Activated CD8-positive, alpha-beta T cell treated with anti-CD3 and anti-CD28 coated beads, Interleukin-2, amount 10 ng/mL, durations not matched to agents 7 days and 5 days (primary cell): ENCODE measurements at regions of chr12 and their contacts with region 1.

Region 1: DNA sequence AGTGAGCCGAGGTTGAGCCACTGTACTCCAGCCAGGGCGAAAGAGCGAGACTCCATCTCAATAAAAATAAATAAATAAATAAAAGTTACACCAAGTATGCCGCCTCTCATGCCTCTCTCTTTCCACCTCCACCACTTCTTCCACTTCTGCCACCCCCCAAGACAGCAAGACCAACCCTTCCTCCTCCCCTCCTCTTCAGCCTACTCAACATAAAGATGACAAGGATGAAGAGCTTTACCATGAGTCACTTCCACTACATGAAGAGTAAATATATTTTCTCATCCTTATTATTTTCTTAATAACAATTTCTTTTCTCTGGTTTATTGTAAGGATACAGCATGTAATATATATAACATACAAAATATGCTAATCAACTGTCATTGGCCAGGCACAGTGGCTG is 3.6 kb upstream of the TMED2 start:
- DNase-seq: no peak
- ATAC-seq: no peak
- H3K4me3 Mint-ChIP-seq: no peak overlapping the region
- H3K27ac Mint-ChIP-seq: no peak overlapping the region
- H3K4me1 Mint-ChIP-seq: peaks cover 17% of the 10 kb centered on the region
- H3K27me3 Mint-ChIP-seq: no peaks in the 10 kb centered on the region

Region 2: GRCh38 chr12:123427036-123427769 is 153.6 kb before region 1 on chr12:
- CTCF ChIA-PET with region 1: interaction called, 13 read pairs
- POLR2A ChIA-PET with region 1: no interaction called
- DNase-seq: peak; percentile 42
- ATAC-seq: peak; percentile 57
- H3K4me3 Mint-ChIP-seq: no peak overlapping the region
- H3K27ac Mint-ChIP-seq: peak overlapping the region; percentile 85
- H3K4me1 Mint-ChIP-seq: peaks cover 25% of the 10 kb centered on the region
- H3K27me3 Mint-ChIP-seq: no peaks in the 10 kb centered on the region

Region 3: DNA sequence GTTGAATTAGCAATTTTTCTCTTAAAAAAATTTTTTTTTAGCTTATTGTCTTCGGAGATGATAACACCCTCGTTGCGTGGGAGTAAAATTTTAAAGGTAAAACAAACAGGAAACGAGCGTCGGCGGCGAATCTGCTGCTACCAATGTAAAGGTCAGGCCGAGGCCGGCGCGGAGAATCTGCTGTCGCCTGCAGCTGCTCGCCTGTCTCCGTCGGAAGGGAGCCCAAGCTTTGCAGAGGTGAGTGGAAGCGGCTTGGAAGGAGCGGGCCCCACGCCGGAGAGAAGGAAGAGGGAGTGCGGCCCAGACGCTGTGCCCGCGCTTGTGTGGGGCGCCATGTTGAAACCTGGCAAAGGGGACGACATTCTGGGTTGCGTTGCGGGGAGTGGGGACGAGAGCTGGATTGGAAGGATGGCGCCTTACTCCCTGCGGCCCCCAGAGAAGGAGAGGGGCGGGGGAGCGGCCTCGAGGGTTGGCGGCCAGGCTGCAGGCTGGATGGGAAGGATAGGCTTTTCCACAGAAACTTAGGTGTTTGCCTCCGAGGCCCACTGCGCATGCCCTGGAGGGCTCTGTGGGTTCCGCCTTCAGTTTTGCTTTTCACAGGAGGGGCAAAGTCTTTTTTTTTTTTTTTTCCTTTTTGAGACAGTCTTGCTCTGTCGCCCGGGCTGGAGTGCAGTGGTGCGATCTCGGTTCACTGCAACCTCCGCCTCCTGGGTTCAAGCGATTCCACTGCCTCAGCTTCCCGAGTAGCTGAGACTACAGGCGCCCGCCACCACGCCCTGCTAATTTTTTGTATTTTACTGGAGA is 122.6 kb before region 1 on chr12 and contains the start of gene SNRNP35:
- CTCF ChIA-PET with region 1: interaction called, 10 read pairs
- POLR2A ChIA-PET with region 1: interaction called, 4 read pairs
- DNase-seq: peak; percentile 88
- ATAC-seq: peak; percentile 78
- H3K4me3 Mint-ChIP-seq: peak within 1 kb of the TSS; percentile 92
- H3K27ac Mint-ChIP-seq: peak within 1 kb of the TSS; percentile 99
- H3K4me1 Mint-ChIP-seq: peaks cover 25% of the 10 kb centered on the region
- H3K27me3 Mint-ChIP-seq: no peaks in the 10 kb centered on the region
- total RNA-seq, gene SNRNP35: 22.9 to 24.1 TPM

Region 4: GRCh38 chr12:123601602-123602489 is 21.1 kb after region 1 on chr12 and contains the start of gene DDX55:
- CTCF ChIA-PET with region 1: interaction called, 10 read pairs
- POLR2A ChIA-PET with region 1: interaction called, 4 read pairs
- DNase-seq: peak; percentile 89
- ATAC-seq: peak; percentile 95
- H3K4me3 Mint-ChIP-seq: peak within 1 kb of the TSS; percentile 90
- H3K27ac Mint-ChIP-seq: peak within 1 kb of the TSS; percentile 98
- H3K4me1 Mint-ChIP-seq: peaks cover 39% of the 10 kb centered on the region
- H3K27me3 Mint-ChIP-seq: no peaks in the 10 kb centered on the region
- total RNA-seq, gene DDX55: 44.7 to 44.8 TPM